Right cardiac atrium (tissue), 5 donors: ENCODE measurements at regions of chr17 and their contacts with region 1.

Region 1: DNA sequence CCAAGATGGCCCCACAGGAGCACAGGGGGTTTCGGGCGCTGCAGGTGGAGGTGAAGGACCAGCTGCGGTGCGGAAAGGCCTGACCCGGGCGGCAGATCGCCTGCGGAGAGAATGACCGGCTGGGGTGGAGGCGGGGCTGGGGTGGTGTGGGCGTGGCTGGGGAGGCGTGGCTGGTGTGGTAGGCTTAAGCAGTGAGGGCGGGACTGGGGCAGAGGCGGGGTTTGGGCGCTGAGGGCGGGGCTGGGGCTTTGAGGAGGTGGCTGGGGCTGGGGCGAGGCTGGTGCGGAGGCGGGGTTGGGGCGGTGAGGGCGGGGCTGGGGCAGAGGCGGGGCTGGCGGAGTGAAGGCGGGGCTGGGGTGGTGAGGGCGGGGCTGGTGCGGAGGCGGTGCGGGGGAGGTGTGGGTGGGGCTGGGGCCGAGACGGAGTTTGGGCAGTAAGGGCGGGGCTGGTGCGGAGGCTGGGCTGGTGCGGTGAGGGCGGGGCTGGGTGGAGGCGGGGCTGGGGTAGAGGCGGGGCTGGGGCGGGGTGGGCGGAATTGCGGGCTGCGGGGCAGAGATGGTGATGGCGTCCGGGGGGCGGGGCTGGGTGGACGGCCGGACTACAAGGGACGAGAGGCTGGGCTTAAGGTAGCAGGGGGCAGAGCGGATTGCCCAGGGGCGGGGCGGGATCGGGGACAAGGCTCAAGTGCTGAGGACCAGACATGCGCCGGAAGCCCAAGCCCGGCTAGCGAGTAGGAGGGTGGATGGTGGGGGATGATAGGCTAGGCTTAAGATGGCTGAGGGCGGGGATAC is 9.9 kb upstream of the GSDMA start:
- DNase-seq: peak; percentile 98 to 99 (median 99)
- ATAC-seq: peak; percentile 96
- H3K4me3 ChIP-seq: peak overlapping the region; percentile 11
- H3K27ac ChIP-seq: peak overlapping the region; percentile 1
- H3K4me1 ChIP-seq: no peaks in the 10 kb centered on the region
- H3K27me3 ChIP-seq: no peaks in the 10 kb centered on the region

Region 2: GRCh38 chr17:39782485-39782884 is 170.4 kb before region 1 on chr17:
- intact Hi-C with region 1: no loop called
- DNase-seq: no peak
- ATAC-seq: peak; percentile 75 to 95
- H3K4me3 ChIP-seq: no peak overlapping the region
- H3K27ac ChIP-seq: no peak overlapping the region
- H3K4me1 ChIP-seq: peaks cover 1% of the 10 kb centered on the region
- H3K27me3 ChIP-seq: no peaks in the 10 kb centered on the region

Region 3: DNA sequence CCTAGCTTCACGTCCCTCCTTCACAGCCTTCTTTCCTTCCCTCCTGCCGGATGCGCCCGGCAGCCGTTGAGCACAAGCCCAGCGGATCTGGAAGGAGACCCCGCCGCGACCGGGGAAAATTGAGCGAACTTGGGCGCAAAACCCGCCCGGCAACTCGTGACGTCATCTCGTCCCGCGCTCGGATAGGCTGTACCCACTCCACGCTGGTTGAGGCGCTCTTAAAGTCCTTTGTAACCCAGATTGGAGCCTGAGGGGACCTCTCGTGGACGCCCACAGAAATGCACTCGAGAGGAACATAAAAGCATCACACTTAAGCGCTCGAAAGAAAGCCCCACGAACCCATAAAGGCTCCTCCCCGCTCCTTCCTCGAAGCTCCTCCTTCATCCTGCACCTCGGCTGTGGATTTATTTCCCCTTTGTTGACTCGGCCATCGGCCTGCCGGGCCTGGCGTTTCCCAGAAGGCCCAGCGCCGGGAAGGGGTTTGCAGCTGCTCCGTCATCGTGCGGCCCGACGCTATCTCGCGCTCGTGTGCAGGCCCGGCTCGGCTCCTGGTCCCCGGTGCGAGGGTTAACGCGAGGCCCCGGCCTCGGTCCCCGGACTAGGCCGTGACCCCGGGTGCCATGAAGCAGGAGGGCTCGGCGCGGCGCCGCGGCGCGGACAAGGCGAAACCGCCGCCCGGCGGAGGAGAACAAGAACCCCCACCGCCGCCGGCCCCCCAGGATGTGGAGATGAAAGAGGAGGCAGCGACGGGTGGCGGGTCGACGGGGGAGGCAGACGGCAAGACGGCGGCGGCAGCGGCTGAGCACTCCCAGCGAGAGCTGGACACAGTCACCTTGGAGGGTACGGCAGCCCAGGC is 27.7 kb after region 1 on chr17 and contains the start of gene PSMD3:
- intact Hi-C with region 1: loop called in 1 of 4 experiments (anchors 2 kb)
- DNase-seq: peak; percentile 97 to 99 (median 98)
- ATAC-seq: peak; percentile 97
- H3K4me3 ChIP-seq: peak within 1 kb of the TSS; percentile 81
- H3K27ac ChIP-seq: peak within 1 kb of the TSS; percentile 83
- H3K4me1 ChIP-seq: no peaks in the 10 kb centered on the region
- H3K27me3 ChIP-seq: no peaks in the 10 kb centered on the region
- total RNA-seq, gene PSMD3: 80.0 to 83.1 (median 81.1) TPM